Activated CD4-positive, alpha-beta T cell treated with anti-CD3 and anti-CD28 coated beads, Interleukin-2, amount 10 ng/mL, durations not matched to agents 24 days and 14 days (primary cell): ENCODE measurements at regions of chr11 and their contacts with region 1.

Region 1: GRCh38 chr11:88535916-88536547 is 198.5 kb upstream of the CTSC start:
- DNase-seq: no peak
- H3K4me3 Mint-ChIP-seq: no peak overlapping the region
- H3K27ac Mint-ChIP-seq: no peak overlapping the region
- H3K4me1 Mint-ChIP-seq: peaks cover 13% of the 10 kb centered on the region
- H3K27me3 Mint-ChIP-seq: peaks cover 4% of the 10 kb centered on the region

Region 2: GRCh38 chr11:88301488-88302140 is 234.4 kb before region 1 on chr11:
- intact Hi-C with region 1: loop called (anchors 5 kb)
- DNase-seq: peak; percentile 57
- H3K4me3 Mint-ChIP-seq: peak overlapping the region; percentile 44
- H3K27ac Mint-ChIP-seq: peak overlapping the region; percentile 94
- H3K4me1 Mint-ChIP-seq: peaks cover 35% of the 10 kb centered on the region
- H3K27me3 Mint-ChIP-seq: no peaks in the 10 kb centered on the region